ENCODE measurements at regions of chr4 and their contacts with region 1.

Region 1: DNA sequence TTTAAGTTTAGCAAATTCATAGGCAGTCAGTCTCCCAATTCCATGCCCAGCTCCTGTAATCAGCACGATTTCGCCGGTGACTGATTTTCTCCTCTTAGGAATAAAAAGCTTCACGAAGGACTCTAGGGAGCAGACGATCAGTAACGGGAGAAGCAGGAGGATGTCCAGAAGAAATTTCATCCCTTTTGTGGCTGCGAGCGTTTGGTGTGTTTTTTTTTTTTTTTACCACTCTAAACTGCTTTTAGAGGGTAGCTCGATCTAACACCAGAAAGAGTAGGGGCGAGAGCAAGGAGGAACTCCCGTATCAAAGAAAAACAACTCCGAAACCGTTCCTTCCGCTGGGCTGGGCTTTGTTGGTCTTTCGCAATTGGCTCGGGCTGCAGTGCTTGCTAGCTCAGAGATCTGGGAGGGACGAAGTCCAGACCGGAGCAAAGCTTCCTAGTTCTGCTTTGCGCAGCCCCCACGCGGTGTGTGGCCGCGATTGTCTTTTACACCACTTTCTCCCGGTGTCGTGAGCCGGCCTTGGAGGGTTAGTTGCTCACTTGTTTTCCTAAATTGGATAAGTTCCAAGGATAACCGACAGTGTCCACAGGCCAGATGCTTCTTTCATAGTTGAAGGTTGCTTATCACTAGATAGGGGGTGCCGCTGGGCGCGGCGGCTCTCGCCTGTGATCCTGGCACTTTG is at the start of gene HSD17B11:
- DNase-seq: peak; percentile 64 to 90 (median 78)
- ATAC-seq: peak; percentile 98 to 99 (median 98)
- H3K4me3 ChIP-seq: peak within 1 kb of the TSS; percentile 86 to 99
- H3K4me3 Mint-ChIP-seq: peak within 1 kb of the TSS; percentile 93 to 95 (median 94)
- H3K27ac ChIP-seq: peak within 1 kb of the TSS; percentile 82
- H3K27ac Mint-ChIP-seq: peak within 1 kb of the TSS; percentile 92 to 97
- H3K4me1 ChIP-seq: peaks cover 10 to 33% of the 10 kb centered on the region in 2 experiments
- H3K4me1 Mint-ChIP-seq: peaks cover 49 to 62% (median 51%) of the 10 kb centered on the region in 3 donors
- H3K27me3 ChIP-seq: no peaks in the 10 kb centered on the region
- H3K27me3 Mint-ChIP-seq: no peaks in the 10 kb centered on the region
- total RNA-seq, gene HSD17B11: 38.0 to 57.7 (median 51.2) TPM

Region 2: GRCh38 chr4:86048426-86048825 is 1342.6 kb before region 1 on chr4:
- CTCF ChIA-PET with region 1: no interaction called
- POLR2A ChIA-PET with region 1: no interaction called
- DNase-seq: no peak
- ATAC-seq: no peak
- H3K4me3 ChIP-seq: no peak overlapping the region
- H3K4me3 Mint-ChIP-seq: no peak overlapping the region
- H3K27ac ChIP-seq: no peak overlapping the region
- H3K27ac Mint-ChIP-seq: no peak overlapping the region
- H3K4me1 ChIP-seq: no peaks in the 10 kb centered on the region
- H3K4me1 Mint-ChIP-seq: no peaks in the 10 kb centered on the region
- H3K27me3 ChIP-seq: no peaks in the 10 kb centered on the region
- H3K27me3 Mint-ChIP-seq: no peaks in the 10 kb centered on the region

Region 3: DNA sequence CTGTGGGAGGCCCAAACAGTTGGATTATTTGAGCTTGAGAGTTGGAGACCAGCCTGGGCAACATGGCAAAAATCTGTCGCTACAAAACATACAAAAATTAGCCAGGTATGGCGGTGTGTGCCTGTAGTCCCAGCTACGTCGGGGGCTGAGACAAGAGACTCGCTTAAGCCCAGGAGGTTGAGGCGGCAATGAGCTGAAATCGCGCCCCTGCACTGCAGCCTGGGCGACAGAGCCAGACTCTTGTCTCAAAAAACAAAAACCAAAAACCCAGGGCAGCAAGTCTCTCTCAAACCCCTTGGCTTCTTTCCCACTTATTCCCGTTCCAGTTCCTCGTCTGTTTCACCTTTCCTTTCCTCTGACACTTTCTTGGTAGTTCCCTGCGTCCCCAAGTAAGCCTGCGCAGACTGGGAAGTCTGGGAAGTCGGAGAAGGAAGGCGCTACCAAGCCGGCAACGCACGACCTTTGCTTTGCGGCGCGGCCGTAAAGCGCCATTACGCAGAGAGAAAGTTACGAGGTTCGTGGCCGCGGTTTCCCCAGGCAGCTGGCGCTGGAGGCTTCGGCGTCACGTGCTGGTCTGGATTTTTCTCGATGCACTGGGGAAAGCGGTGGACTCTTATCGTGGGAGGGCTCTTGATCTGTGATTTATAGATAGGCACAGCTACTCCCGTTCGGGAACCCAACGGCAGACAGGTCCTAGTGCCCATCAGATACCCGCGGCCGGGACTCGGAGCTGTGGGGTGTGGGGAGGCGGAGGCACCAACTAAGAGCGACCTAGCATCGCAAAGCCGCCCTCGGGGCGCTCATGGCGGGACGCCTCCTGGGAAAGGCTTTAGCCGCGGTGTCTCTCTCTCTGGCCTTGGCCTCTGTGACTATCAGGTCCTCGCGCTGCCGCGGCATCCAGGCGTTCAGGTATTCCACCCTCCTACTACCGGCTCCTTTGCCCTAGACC is 31.3 kb after region 1 on chr4 and contains the start of gene NUDT9:
- CTCF ChIA-PET with region 1: interaction called, 14 to 30 read pairs
- POLR2A ChIA-PET with region 1: interaction called, 3 to 13 read pairs
- DNase-seq: peak; percentile 70 to 92 (median 84)
- ATAC-seq: peak; percentile 84 to 91 (median 88)
- H3K4me3 ChIP-seq: peak within 1 kb of the TSS; percentile 90 to 97
- H3K4me3 Mint-ChIP-seq: peak within 1 kb of the TSS; percentile 95 to 99 (median 99)
- H3K27ac ChIP-seq: peak within 1 kb of the TSS; percentile 89
- H3K27ac Mint-ChIP-seq: peak within 1 kb of the TSS; percentile 99 to 100
- H3K4me1 ChIP-seq: peaks cover 9 to 21% of the 10 kb centered on the region in 2 experiments
- H3K4me1 Mint-ChIP-seq: peaks cover 36 to 43% (median 41%) of the 10 kb centered on the region in 3 donors
- H3K27me3 ChIP-seq: no peaks in the 10 kb centered on the region
- H3K27me3 Mint-ChIP-seq: no peaks in the 10 kb centered on the region
- total RNA-seq, gene NUDT9: 10.1 to 18.0 (median 13.9) TPM

Region 4: DNA sequence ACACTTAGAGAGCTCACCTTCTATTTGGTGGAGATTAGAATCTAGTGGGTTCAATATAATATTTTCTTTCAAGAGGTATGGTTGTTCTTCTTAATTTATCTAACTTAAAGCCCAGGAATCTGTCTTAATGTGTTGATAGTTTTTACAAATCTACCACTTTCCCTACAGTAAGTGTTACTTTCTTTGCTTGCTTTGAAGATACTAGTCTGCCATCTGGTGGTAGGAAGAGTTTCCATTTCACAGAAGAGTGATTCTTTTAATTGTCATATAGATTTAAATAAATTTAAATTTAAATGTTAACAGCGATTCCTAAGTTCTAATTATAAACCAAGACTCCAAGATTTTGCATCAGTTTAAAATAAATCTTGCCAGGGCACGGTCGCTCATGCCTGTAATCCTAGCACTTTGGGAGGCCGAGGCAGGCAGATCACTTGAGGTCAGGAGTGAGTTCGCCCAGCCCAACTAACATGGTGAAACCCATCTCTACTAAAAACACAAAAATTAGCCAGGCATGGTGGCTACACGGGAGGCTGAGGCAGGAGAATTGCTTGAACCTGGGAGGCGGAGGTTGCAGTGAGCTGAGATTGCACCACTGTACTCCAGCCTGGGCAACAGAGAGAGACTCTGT is 74.8 kb after region 1 on chr4:
- CTCF ChIA-PET with region 1: interaction called, 8 to 11 read pairs
- POLR2A ChIA-PET with region 1: interaction called in 1 of 2 experiments, 4 read pairs
- DNase-seq: peak in 6 of 35 experiments; percentile 1 to 69 (median 8)
- ATAC-seq: peak in 1 of 4 experiments; percentile 39
- H3K4me3 ChIP-seq: no peak overlapping the region
- H3K4me3 Mint-ChIP-seq: no peak overlapping the region
- H3K27ac ChIP-seq: no peak overlapping the region
- H3K27ac Mint-ChIP-seq: no peak overlapping the region
- H3K4me1 ChIP-seq: no peaks in the 10 kb centered on the region
- H3K4me1 Mint-ChIP-seq: peaks cover 0 to 3% (median 0%) of the 10 kb centered on the region in 3 donors
- H3K27me3 ChIP-seq: no peaks in the 10 kb centered on the region
- H3K27me3 Mint-ChIP-seq: no peaks in the 10 kb centered on the region